ENCODE measurements at regions of chr1 and their contacts with region 1.

Region 1: DNA sequence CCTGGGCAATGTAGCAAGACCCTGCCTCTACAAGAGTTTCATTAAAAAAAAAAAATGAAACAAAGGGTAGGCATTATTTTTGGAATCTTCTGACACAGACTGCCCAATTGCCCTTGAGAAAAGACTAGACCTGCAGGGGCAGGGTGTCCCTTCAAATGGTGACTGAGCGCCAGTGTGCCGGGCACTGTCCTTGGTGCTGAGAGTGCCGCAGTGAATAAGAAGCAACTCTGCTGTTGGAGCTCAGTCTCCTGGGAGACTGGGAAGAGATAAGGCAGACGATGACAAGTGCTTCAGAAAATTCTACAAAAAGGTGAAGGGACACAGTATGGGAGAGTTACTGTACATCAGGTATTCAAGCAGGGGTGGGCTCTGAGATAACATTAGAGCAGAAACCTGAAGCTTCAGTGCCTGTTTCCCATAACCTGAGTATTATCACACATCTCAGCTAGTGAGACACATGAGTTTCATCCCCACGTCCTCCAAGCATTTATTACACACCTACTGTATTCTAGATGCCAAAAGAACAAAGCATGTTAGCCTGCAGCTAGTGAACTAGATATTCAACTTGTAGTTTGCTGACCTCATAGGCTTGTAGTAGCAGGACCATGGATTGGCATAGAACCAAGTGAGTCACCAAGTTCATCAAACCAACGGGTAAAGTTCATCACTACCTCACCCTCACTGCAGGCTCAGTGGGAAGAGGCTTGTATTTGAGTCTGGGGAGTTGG is 18.4 kb upstream of the RPL11 start:
- DNase-seq: no peak
- ATAC-seq: no peak
- H3K4me3 ChIP-seq: no peak overlapping the region
- H3K27ac ChIP-seq: no peak overlapping the region
- H3K4me1 ChIP-seq: no peaks in the 10 kb centered on the region
- H3K27me3 ChIP-seq: 0 out of 2 replicates have a peak, but pooled peaks cover 2% of the 10 kb centered on the region
- CTCF ChIP-seq: no peak

Region 2: DNA sequence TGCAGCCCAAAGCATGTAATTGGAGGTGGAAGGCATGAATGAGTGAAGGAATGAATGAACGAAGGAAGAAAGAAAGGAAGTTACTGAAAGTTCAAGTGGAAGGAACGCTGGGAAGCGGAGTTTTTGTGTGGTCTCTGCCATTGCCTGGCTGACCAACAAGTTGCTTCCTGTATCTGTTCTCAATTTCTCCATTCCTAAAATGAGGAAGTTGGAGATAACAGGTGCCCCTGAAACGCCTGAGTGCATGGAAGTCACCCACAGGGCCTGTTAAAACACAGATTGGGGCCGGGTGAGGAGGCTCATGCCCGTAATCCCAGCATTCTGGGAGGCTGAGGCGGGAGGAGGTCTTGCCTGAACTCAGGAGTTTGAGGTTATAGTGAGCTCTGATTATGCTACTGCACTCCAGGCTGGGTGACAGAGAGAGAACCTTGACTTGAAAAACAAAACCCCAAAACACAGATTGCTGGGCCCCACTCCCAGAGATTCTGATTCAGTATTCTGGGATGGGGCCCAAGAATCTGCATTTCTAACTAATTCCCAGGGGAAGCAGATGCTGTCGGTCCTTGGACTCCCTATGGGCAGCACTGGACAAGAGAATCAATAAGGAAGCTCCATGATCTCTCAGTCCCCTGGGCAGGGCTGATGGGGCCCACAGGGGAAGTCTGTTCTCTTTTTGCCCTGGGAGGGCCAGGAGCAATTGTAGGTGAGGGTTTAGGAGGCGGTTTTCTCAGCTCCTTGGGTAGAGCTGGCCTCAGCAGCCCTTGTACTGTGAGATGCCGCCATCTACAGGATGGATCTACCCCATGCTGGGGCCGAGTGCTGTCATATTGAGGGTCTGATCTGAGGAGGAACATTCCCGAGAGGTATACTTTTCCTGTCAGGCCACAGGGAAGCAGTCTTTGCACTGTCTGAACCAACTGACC is 243.2 kb after region 1 on chr1:
- CTCF ChIA-PET with region 1: no interaction called
- POLR2A ChIA-PET with region 1: no interaction called
- in situ Hi-C with region 1: no loop called
- intact Hi-C with region 1: no loop called
- DNase-seq: peak; percentile 51
- ATAC-seq: peak; percentile 97
- H3K4me3 ChIP-seq: no peak overlapping the region
- H3K27ac ChIP-seq: no peak overlapping the region
- H3K4me1 ChIP-seq: no peaks in the 10 kb centered on the region
- H3K27me3 ChIP-seq: no peaks in the 10 kb centered on the region
- CTCF ChIP-seq: peak; percentile 85

Region 3: DNA sequence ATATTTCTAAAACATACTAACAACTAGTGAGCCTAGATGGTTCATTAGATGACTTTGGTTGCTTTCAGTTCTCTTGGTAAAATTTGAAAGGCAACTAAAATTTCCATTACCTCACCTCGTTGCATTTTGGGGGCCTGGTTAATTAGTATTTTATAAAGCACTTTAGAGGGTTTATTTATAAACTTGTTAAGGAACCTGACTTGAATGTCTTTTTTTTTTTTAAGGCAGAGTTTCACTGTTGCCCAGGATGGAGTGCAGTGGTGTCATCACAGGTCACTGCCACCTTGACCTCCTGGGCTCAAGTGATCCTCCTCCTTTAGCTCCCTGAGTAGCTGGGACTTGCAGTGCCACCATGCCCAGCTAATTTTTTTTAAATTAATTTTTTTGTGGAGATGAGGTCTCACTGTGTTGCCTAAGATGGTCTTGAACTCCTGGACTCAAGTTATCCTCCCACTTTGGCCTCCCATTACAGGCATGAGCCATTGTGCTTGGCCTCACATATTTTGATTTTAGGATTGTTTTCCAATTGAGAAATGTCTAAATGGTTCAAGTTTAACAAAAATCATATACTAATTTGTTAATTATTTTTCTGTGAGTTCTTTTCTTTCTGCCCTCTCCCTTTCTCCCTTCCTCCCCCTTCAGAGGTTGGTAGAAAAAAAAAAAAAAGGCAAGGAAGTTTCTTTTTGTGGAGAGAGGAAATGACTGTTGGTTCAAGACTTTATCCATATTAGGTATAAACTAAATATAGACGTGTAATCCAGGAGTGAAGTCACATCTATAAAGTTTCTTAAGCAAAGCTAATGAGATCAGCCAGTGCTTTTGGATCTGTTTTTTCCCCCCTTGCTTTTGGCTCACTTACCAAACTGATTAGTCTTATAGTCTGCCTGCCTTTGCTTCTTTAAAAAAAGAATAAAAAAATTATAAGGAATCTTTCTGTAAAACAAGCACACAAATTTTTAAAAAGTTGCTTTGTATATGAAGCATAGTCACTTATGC is 1096.7 kb after region 1 on chr1:
- CTCF ChIA-PET with region 1: no interaction called
- POLR2A ChIA-PET with region 1: interaction called, 16 read pairs
- in situ Hi-C with region 1: no loop called
- intact Hi-C with region 1: no loop called
- DNase-seq: no peak
- ATAC-seq: no peak; the same call in 1 of the 2 replicates
- H3K4me3 ChIP-seq: no peak overlapping the region
- H3K27ac ChIP-seq: no peak overlapping the region
- H3K4me1 ChIP-seq: peaks cover 15% of the 10 kb centered on the region
- H3K27me3 ChIP-seq: no peaks in the 10 kb centered on the region
- CTCF ChIP-seq: no peak

Measured in Panc1 (cell line).